ENCODE measurements at regions of chr5 and their contacts with region 1.

Region 1: DNA sequence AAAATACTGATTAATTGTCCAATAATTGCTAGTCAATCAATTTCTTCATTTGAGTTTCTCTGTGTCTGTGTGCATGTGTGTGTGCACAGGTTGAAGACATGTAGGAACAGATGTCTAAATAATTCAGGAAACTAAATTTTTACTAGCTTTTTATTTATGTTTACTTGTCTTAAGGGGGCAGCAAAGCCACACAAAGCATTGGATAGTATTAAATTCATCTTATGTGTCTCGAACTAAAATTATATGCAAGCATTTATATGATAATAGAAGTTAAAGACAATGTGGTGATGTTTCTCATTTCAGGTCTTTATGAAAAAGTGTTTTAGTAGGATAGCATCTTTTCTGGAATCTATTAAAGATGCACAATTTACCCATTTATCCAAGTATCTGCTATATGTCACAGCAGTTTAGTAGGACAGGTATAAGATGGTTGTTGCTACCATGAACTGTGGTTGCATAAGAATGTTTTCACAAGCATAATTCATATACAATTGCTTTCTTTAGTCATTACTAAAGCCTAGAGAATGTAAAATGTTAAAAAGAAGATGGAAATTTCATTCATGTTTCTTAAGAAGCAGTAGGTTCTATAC is 784.6 kb upstream of the NUDT12 start:
- DNase-seq: peak; percentile 59
- H3K4me3 ChIP-seq: no peak overlapping the region
- H3K27ac ChIP-seq: no peak overlapping the region
- H3K4me1 ChIP-seq: peaks cover 5% of the 10 kb centered on the region
- H3K27me3 ChIP-seq: no peaks in the 10 kb centered on the region
- CTCF ChIP-seq: peak in 1 of 2 donors; percentile 21
- POLR2A ChIP-seq: no peak

Region 2: DNA sequence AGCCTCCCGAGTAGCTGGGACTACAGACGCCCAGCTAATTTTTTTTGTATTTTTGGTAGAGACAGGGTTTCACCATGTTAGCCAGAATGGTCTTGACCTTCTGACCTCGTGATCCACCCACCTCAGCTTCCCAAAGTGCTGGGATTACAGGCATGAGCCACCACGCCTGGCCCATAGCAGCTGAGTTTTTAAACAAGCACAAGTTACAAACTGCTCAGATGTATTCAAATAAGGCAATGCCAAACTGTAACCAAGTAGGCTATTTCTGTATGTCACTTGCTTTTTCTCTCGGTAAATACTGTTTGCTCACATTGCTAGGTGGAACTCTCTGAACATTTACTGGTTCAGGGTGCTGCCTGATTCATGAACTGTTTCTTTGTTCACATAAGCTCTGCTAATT is 14.7 kb after region 1 on chr5:
- CTCF ChIA-PET with region 1: interaction called, 16 read pairs
- POLR2A ChIA-PET with region 1: no interaction called
- dilution Hi-C with region 1: no loop called
- intact Hi-C with region 1: no loop called
- DNase-seq: no peak
- H3K4me3 ChIP-seq: no peak overlapping the region
- H3K27ac ChIP-seq: no peak overlapping the region
- H3K4me1 ChIP-seq: no peaks in the 10 kb centered on the region
- H3K27me3 ChIP-seq: no peaks in the 10 kb centered on the region
- CTCF ChIP-seq: no peak
- POLR2A ChIP-seq: no peak

Region 3: DNA sequence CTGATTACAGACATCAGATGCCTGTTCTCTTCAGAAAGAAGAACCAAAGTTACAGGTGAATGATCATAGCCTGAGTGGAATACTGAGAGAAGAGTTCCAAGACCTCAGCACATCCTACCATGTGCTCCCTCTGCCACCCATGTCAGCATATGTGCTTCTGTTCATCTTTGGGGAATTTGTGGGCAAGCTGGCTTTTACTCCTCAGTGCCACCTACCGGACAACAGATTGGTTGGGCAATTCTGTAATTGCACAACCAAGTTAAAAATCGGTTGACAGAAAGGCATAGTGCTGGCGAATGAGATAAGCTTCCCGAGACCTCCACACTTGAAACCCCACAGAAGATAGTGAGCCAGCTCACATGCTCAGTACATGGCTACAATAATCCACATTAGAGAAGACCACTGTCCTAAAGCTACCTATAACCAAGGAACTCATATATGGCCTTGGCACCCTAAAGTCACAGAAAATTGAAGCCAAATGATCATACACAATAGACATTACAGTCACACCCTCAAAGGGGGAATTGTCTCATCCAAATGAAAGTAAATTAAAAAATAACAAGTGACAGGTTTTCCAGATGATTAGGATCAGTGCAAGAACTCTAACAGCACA is 453.3 kb after region 1 on chr5:
- CTCF ChIA-PET with region 1: interaction called, 15 read pairs
- POLR2A ChIA-PET with region 1: no interaction called
- dilution Hi-C with region 1: no loop called
- intact Hi-C with region 1: loop called (anchors 10 kb)
- DNase-seq: peak; percentile 3
- H3K4me3 ChIP-seq: no peak overlapping the region
- H3K27ac ChIP-seq: no peak overlapping the region
- H3K4me1 ChIP-seq: no peaks in the 10 kb centered on the region
- H3K27me3 ChIP-seq: no peaks in the 10 kb centered on the region
- CTCF ChIP-seq: peak; percentile 6 to 14
- POLR2A ChIP-seq: no peak

Region 4: DNA sequence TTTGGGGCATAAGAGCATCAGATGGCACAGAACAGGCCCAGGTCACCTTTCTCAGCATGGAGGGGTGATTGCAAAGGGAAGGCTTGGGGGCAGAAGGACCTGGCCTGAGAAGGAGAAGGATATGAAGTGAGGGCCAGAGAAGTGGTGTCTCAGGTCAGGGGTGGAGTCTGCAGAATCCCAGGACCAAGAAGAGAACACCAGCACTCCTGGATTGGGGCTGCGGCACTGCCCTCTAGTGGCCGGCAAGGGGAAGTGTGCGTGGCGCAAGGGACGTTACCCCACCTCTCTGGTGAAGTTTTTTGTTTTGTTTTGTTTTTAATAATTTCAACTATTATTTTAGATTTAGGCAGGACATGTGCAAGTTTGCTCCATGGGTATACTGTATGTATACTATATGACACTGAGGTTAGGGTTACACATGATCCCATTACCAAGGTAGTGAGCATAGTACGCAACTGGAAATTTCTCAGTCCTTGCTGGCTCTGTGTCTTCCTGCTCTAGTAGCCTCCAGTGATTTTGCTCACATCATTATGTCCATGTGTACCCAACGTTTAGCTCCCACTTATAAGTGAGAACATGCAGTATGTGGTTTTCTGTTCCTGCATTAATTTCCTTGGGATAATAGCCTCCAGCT is 1774.9 kb after region 1 on chr5:
- CTCF ChIA-PET with region 1: interaction called, 3 read pairs
- POLR2A ChIA-PET with region 1: no interaction called
- dilution Hi-C with region 1: no loop called
- intact Hi-C with region 1: loop called (anchors 2 kb)
- DNase-seq: no peak
- H3K4me3 ChIP-seq: no peak overlapping the region
- H3K27ac ChIP-seq: no peak overlapping the region
- H3K4me1 ChIP-seq: no peaks in the 10 kb centered on the region
- H3K27me3 ChIP-seq: no peaks in the 10 kb centered on the region
- CTCF ChIP-seq: peak; percentile 60 to 70
- POLR2A ChIP-seq: no peak

Measured in endothelial cell of umbilical vein (primary cell).